ENCODE measurements at regions of chr6 and their contacts with region 1.

Region 1: GRCh38 chr6:37102279-37103168 is 67.4 kb upstream of the PIM1 start:
- DNase-seq: peak; percentile 73 to 87
- H3K4me3 ChIP-seq: peak overlapping the region; percentile 18 to 53 (median 47); a peak in 7 of 8 replicates
- H3K27ac ChIP-seq: peak overlapping the region; percentile 81
- H3K4me1 ChIP-seq: peaks cover 23 to 33% (median 28%) of the 10 kb centered on the region in 4 experiments
- H3K27me3 ChIP-seq: no peaks in the 10 kb centered on the region
- CTCF ChIP-seq: peak in 1 of 3 experiments; percentile 2; a peak in 1 of 4 replicates
- EP300 ChIP-seq: peak; percentile 46 to 91; a peak in 2 of 3 replicates
- POLR2A ChIP-seq: peak; percentile 22 to 50
- RAD21 ChIP-seq: peak in 1 of 2 experiments; percentile 14; a peak in 1 of 4 replicates

Region 2: GRCh38 chr6:37083243-37084138 is 19.0 kb before region 1 on chr6:
- CTCF ChIA-PET with region 1: interaction called, 4 read pairs
- POLR2A ChIA-PET with region 1: interaction called, 56 read pairs
- DNase-seq: no peak
- H3K4me3 ChIP-seq: no peak overlapping the region
- H3K27ac ChIP-seq: no peak overlapping the region
- H3K4me1 ChIP-seq: peaks cover 0 to 2% (median 0%) of the 10 kb centered on the region in 4 experiments; a peak in 1 of 7 replicates
- H3K27me3 ChIP-seq: no peaks in the 10 kb centered on the region
- CTCF ChIP-seq: no peak
- EP300 ChIP-seq: no peak
- POLR2A ChIP-seq: no peak
- RAD21 ChIP-seq: no peak

Region 3: GRCh38 chr6:37125783-37126492 is 23.4 kb after region 1 on chr6:
- CTCF ChIA-PET with region 1: interaction called, 5 read pairs
- POLR2A ChIA-PET with region 1: interaction called, 496 read pairs
- DNase-seq: peak; percentile 74 to 81
- H3K4me3 ChIP-seq: peak overlapping the region; percentile 12 to 58 (median 39); a peak in 7 of 8 replicates
- H3K27ac ChIP-seq: peak overlapping the region; percentile 94
- H3K4me1 ChIP-seq: peaks cover 19 to 42% (median 31%) of the 10 kb centered on the region in 4 experiments
- H3K27me3 ChIP-seq: no peaks in the 10 kb centered on the region
- CTCF ChIP-seq: no peak
- EP300 ChIP-seq: peak in 1 of 2 experiments; percentile 26; a peak in 1 of 3 replicates
- POLR2A ChIP-seq: peak in 1 of 2 experiments; percentile 53; a peak in 2 of 3 replicates
- RAD21 ChIP-seq: peak in 1 of 2 experiments; percentile 0; a peak in 1 of 4 replicates

Region 4: DNA sequence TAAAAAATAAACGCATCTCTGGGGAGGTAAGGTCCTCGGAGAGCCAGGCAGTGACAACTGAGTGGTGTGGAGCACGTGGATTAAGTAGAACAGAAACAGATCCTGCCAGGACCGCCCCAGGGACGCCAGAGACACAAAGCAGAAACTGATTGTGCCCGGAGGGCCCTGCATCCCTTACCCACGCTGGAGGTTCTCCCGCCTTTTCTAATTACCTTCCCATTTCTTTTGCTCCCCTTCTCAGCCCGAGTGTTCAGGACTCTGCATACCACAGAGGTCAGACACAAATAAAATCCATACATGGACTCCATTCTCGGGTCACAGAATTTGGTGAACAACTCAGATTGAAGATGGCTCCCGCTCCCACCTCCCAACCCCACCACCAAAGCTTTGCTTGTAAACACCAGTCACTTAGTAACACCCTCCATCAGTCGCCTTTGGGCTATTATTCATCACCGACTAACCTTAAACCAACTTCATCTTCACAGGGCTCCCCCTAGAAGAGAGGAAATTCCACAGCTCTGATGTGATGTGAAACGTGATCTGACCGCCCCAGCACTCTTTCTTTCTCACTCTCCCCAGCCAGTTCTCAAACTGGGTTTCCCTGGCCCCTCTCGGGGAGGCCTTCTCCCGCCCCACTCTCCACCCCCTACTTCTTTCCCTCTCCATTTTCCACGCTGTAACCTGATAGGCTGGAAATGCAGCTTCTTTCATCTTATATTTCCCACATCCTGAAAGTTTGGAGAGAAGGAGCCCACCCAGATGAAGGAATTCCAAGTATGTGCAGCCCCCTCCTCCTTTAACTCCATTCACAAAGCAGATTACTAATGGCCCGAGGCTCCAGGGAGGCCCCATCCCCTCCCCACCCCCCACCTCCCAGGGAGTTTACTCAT is 34.9 kb after region 1 on chr6:
- CTCF ChIA-PET with region 1: interaction called, 4 read pairs
- POLR2A ChIA-PET with region 1: interaction called, 496 read pairs
- DNase-seq: peak; percentile 77 to 93
- H3K4me3 ChIP-seq: peak overlapping the region; percentile 49 to 90 (median 87)
- H3K27ac ChIP-seq: peak overlapping the region; percentile 98
- H3K4me1 ChIP-seq: peaks cover 15 to 37% (median 28%) of the 10 kb centered on the region in 4 experiments
- H3K27me3 ChIP-seq: no peaks in the 10 kb centered on the region
- CTCF ChIP-seq: no peak
- EP300 ChIP-seq: peak; percentile 29 to 86; a peak in 2 of 3 replicates
- POLR2A ChIP-seq: peak in 1 of 2 experiments; percentile 95; a peak in 2 of 3 replicates
- RAD21 ChIP-seq: peak; percentile 18 to 28; a peak in 2 of 4 replicates

Region 5: DNA sequence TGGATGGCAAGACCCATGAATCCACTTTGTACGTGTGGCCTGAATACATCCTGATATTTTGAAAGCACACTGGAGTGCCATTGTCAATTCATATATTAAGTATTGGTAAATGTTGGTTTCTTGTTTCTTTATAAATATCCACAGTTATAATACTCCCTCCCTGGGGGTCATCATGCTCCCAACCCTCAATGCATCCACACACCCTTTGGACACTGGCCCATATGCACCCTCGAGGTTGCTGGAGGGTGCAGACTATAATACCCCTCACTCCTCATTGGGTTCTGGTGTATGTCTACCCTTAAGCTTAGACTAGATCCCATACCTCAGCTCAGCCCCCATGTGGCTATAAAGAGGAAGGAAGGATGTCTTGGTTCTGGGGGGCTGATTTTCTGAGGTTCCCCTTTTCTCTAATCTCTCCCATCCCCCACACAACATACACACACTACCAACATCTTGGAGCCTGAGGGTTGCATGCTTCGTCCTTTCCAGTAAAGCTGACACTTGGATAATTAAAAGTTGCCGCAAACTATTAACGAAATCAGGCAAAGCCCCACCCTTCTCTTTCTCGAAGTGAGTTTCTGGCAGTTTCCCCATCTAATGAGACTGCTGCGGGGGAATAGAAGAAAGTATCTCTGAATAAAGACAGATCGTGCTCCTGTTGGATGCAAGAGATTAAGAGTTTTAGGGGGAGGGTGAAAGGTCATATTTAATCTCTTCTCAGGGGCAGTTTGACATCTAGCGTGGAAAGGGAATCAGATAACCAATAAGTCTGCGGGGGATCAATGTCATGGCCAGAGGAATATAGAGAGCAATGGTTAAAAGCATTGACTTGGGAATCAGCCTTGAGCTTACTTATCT is 74.8 kb after region 1 on chr6:
- CTCF ChIA-PET with region 1: interaction called, 20 read pairs
- POLR2A ChIA-PET with region 1: interaction called, 1,024 read pairs
- DNase-seq: no peak
- H3K4me3 ChIP-seq: no peak overlapping the region
- H3K27ac ChIP-seq: no peak overlapping the region
- H3K4me1 ChIP-seq: peaks cover 5 to 8% (median 6%) of the 10 kb centered on the region in 4 experiments; a peak in 5 of 7 replicates
- H3K27me3 ChIP-seq: no peaks in the 10 kb centered on the region
- CTCF ChIP-seq: no peak
- EP300 ChIP-seq: no peak
- POLR2A ChIP-seq: no peak
- RAD21 ChIP-seq: no peak